GM10248 (cell line): ENCODE measurements at regions of chr5 and their contacts with region 1.

Region 1: GRCh38 chr5:43631182-43631910 is 28.4 kb downstream of the NNT start:
- DNase-seq: peak; percentile 25
- CTCF ChIP-seq: peak; percentile 54

Region 2: DNA sequence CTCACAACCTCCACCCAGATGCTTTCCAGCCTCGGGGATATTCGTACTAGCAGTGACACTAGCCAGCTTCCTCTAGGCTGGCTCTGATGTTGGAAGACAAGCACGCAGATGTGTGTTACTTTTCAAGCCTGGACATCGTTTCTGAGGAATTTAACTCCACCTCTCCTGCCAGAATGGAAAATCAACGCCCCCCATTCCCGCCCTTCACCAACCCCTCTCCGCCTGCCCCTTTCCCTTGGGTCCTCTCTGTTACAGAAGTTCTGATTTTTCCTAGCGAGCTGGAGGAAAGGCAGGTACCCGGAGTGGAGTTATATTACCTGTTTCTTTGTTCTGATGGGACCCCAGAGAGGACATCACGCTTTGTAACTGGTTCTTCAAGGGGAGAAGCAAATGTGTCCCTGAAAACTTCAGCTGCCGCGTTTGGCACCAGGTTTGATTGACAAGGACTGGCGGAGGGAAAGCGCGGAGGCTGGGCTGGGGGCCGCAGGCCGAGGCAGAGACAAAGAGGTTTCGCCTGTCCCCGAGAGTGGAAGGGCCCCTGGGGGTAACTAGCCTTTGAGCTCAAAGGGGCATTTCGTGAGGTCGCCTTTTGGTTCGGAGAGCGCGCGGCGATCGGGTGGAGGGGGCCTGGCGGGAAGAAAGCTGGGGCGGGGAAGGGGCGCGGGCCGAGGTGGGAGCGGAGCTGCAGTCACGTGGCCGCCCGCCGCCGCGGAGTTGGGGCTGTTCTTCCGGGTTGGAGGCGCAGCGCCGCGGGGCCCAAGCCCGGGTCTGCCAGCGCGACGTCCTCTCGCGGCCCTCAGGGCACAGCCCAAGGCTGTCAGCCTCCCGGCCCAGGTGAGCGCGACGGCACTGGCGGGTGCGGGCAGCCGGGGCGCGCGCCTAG is 28.6 kb before region 1 on chr5 and contains the start of gene NNT:
- CTCF ChIA-PET with region 1: interaction called, 11 read pairs
- POLR2A ChIA-PET with region 1: no interaction called
- DNase-seq: peak; percentile 86
- CTCF ChIP-seq: no peak

Region 3: GRCh38 chr5:43609752-43610151 is 21.6 kb before region 1 on chr5:
- CTCF ChIA-PET with region 1: interaction called, 21 read pairs
- POLR2A ChIA-PET with region 1: no interaction called
- DNase-seq: no peak
- CTCF ChIP-seq: peak; percentile 44

Region 4: DNA sequence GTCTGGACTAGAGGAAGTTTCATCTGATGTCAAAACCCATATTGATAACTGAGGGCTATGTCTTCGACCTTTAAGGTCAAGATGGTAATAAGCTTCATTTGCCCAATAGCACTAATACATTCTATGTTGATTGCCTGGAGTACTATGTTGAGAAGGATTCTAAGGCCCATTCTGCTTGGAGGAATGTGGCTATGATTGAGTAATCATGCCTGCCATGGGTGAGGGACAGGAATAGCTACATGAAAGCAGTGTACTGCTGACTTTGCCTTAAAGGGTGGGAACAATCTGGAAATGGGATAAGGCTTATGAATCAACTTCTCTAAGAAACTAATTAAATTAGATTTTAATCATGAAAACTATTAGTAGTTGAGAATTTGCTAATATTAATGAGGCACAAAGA is 14.8 kb before region 1 on chr5:
- CTCF ChIA-PET with region 1: interaction called, 53 read pairs
- POLR2A ChIA-PET with region 1: no interaction called
- DNase-seq: no peak
- CTCF ChIP-seq: no peak

Region 5: GRCh38 chr5:43642428-43642827 is 11.1 kb after region 1 on chr5:
- CTCF ChIA-PET with region 1: interaction called, 51 read pairs
- POLR2A ChIA-PET with region 1: no interaction called
- DNase-seq: no peak
- CTCF ChIP-seq: no peak

Region 6: DNA sequence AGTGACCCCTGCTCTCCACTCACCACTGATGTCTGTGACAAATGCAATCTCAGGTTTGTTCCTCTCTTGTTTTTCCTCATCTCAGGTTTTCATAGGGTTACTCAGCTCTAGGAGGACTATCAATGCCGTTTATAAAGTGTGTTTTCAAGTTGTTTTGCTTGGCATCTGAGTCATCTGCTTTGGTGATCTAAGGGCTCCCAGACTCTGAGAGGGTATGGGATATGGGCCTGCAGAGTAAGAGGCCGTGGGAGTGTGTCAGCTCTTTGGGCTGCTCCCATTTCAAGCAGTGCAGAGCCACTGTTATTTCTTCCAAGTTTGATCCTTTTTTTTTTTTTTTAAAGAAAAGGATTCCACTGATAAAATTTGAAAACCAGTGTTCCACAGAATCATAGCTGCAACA is 17.9 kb after region 1 on chr5:
- CTCF ChIA-PET with region 1: interaction called, 51 read pairs
- POLR2A ChIA-PET with region 1: no interaction called
- DNase-seq: no peak
- CTCF ChIP-seq: no peak

Region 7: GRCh38 chr5:43753069-43753468 is 121.7 kb after region 1 on chr5:
- CTCF ChIA-PET with region 1: no interaction called
- POLR2A ChIA-PET with region 1: no interaction called
- DNase-seq: no peak
- CTCF ChIP-seq: no peak

Region 8: GRCh38 chr5:43859309-43859708 is 228.0 kb after region 1 on chr5:
- CTCF ChIA-PET with region 1: no interaction called
- POLR2A ChIA-PET with region 1: no interaction called
- DNase-seq: no peak
- CTCF ChIP-seq: no peak

Region 9: DNA sequence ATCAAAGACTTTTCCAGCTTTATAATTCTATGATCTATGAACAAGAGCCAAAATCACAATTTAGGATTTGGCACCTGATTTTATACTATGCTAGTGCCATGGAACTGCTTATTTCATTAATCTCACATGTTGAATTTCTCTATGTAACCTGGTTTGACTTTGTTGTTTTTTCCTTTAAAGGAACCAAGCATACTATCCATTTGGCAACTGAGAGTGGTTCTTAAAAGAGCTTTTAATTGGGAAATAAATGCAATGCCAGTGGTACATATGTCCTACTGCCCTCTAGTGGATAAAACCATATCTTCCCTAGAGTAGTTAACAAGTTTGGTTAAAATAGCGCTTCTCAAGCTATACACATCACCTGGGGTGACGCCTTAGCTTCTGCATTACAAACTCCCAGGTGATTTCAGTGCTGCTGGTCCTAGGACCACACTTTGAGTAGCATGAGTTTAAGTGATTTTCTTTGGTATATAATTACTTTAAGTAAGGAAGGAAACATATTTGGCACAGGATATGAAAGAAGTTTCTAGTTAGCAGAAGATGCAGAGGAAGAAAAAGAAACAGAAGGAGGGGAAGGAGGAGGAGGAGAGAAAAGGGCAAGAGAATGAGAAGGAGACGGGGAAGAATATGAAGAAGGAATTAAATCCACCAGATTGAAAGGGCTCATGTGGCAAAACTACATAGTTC is 701.1 kb after region 1 on chr5:
- CTCF ChIA-PET with region 1: interaction called, 24 read pairs
- POLR2A ChIA-PET with region 1: no interaction called
- DNase-seq: peak; percentile 13
- CTCF ChIP-seq: peak; percentile 45